ENCODE measurements at regions of chr20 and their contacts with region 1.

Region 1: DNA sequence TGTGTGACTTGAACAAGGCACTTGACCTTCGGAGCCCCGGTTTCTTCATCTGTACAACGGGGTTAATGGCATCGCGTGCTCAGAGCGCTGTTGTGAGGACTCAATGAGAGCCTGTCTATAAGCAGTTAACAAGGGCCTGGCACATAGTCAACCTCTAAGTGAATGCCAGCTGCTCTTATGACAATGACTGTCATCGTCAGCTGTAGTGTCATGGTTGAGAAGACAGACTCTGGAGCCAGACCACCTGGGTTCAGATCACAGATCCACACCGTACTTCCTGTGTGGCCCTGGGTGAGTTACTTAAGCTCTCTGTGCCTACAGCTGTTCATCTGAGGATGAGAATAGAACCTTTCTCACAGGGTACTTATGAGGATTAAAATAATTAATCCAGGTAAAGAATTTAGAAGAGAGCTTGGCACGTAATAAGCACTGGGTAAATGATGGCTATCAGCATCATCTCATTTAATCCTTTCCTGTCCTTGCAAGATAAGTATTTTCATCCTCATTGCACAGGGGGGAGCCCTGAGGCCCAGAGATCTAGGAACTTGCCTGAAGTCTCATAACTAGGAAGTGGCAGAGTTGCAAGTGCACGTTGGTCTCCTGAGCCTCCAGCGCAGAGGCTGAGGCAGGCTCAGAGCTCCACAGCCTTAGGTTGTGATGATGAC is 105.3 kb downstream of the EYA2 start:
- DNase-seq: peak; percentile 90
- H3K4me3 ChIP-seq: no peak overlapping the region
- H3K27ac ChIP-seq: peak overlapping the region; percentile 69
- H3K4me1 ChIP-seq: peaks cover 74% of the 10 kb centered on the region
- CTCF ChIP-seq: 0 out of 2 replicates have a peak, but pooled peaks have one; percentile 45

Region 2: DNA sequence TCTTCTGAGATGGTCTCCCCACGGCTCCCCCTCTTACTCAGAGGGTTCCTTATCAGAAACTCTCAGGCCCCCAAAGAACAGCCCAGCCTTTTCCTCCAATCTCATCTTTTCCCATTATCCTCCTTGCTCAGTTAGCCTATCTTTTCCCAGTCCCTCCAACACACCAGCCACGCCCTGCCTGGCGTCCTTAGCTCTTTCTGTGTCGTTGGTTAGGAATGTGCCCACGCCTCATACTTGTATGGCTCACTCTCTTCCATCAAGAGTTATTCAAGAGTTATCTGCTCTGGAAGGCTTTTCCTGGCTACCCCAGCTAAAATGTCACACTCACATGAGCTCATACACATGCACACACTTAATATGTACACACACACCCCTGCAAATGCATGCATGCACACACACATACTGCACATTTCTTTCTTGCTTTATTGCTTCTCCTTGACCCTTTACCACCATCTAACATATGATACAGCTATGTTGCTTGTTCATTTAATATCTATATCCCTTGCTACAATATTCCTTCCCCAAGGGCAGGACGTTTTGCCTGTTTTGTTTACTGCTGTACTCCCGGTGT is 252.9 kb before region 1 on chr20:
- CTCF ChIA-PET with region 1: no interaction called
- POLR2A ChIA-PET with region 1: no interaction called
- intact Hi-C with region 1: no loop called
- DNase-seq: no peak
- H3K4me3 ChIP-seq: no peak overlapping the region
- H3K27ac ChIP-seq: no peak overlapping the region
- H3K4me1 ChIP-seq: no peaks in the 10 kb centered on the region
- CTCF ChIP-seq: no peak

Region 3: DNA sequence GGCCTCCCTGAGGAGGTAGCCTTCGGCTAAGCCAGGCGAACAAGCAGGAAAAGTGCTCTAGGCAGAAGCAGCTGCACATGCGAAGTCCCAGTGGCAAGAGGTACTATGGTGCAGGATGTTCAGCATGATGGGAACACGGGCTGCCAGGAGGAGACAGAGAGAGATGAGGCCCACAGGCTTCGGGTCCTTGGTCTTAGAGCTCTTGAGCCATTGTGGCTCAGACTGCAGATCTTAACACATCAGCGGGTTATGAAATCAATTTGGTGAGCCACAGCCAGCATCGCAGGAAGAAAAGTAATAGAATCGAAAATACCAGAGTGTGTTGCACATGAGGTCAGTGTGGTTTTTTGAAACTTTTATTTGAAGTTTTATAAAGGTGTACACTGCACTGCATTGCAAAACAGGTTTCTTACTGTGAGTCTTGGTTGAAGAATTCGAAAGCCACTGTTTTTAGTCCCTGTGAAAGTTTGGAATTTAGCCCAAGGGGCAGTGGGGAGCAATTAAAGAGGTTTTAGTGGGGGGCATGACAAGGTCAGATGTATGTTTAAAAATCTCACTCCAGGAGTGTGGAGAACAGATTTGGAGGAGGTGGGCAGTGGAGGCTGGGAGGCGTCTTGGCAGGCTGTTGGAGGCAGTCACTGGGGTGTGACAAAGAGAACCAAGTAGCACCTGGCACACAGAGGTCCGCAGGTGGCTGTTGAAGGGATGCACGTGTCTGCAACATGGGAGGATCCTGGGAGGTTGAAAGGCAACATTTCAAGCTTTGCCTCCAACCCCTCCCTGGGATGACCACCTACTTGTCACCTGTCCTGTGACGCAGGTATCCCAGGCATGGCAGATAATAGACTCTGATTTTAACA is 35.9 kb before region 1 on chr20:
- CTCF ChIA-PET with region 1: no interaction called
- POLR2A ChIA-PET with region 1: no interaction called
- intact Hi-C with region 1: loop called (anchors 1 kb)
- DNase-seq: peak; percentile 85
- H3K4me3 ChIP-seq: no peak overlapping the region
- H3K27ac ChIP-seq: peak overlapping the region; percentile 50
- H3K4me1 ChIP-seq: peaks cover 30% of the 10 kb centered on the region
- CTCF ChIP-seq: no peak